ENCODE measurements at regions of chr4 and their contacts with region 1.

Region 1: GRCh38 chr4:147590249-147590920 is 26.8 kb upstream of the TMEM184C start:
- DNase-seq: peak; percentile 79
- ATAC-seq: peak; percentile 38
- H3K4me3 ChIP-seq: no peak overlapping the region
- H3K27ac ChIP-seq: no peak overlapping the region
- H3K4me1 ChIP-seq: 0 out of 2 replicates have a peak, but pooled peaks cover 7% of the 10 kb centered on the region
- H3K27me3 ChIP-seq: no peaks in the 10 kb centered on the region
- CTCF ChIP-seq: peak; percentile 74

Region 2: GRCh38 chr4:147019061-147019460 is 571.3 kb before region 1 on chr4:
- CTCF ChIA-PET with region 1: no interaction called
- POLR2A ChIA-PET with region 1: no interaction called
- intact Hi-C with region 1: loop called (anchors 1 kb)
- DNase-seq: peak; percentile 72
- ATAC-seq: peak; percentile 85
- H3K4me3 ChIP-seq: no peak overlapping the region
- H3K27ac ChIP-seq: no peak overlapping the region
- H3K4me1 ChIP-seq: no peaks in the 10 kb centered on the region
- H3K27me3 ChIP-seq: peaks cover 12% of the 10 kb centered on the region
- CTCF ChIP-seq: peak; percentile 77

Region 3: GRCh38 chr4:147111033-147111367 is 479.4 kb before region 1 on chr4:
- CTCF ChIA-PET with region 1: interaction called, 3 read pairs
- POLR2A ChIA-PET with region 1: no interaction called
- intact Hi-C with region 1: loop called (anchors 1 kb)
- DNase-seq: peak; percentile 43
- ATAC-seq: peak; percentile 38; the same call in 1 of the 2 replicates
- H3K4me3 ChIP-seq: no peak overlapping the region
- H3K27ac ChIP-seq: no peak overlapping the region
- H3K4me1 ChIP-seq: no peaks in the 10 kb centered on the region
- H3K27me3 ChIP-seq: no peaks in the 10 kb centered on the region
- CTCF ChIP-seq: peak; percentile 59

Region 4: GRCh38 chr4:147334478-147334877 is 255.9 kb before region 1 on chr4:
- CTCF ChIA-PET with region 1: no interaction called
- POLR2A ChIA-PET with region 1: no interaction called
- intact Hi-C with region 1: loop called (anchors 10 kb)
- DNase-seq: peak; percentile 73
- ATAC-seq: peak; percentile 96
- H3K4me3 ChIP-seq: no peak overlapping the region
- H3K27ac ChIP-seq: peak overlapping the region; percentile 59
- H3K4me1 ChIP-seq: peaks cover 14% of the 10 kb centered on the region; the same call in 1 of the 2 replicates
- H3K27me3 ChIP-seq: no peaks in the 10 kb centered on the region
- CTCF ChIP-seq: no peak

Region 5: GRCh38 chr4:147461161-147461560 is 129.2 kb before region 1 on chr4:
- CTCF ChIA-PET with region 1: no interaction called
- POLR2A ChIA-PET with region 1: no interaction called
- intact Hi-C with region 1: no loop called
- DNase-seq: peak; percentile 72
- ATAC-seq: peak; percentile 64
- H3K4me3 ChIP-seq: no peak overlapping the region
- H3K27ac ChIP-seq: peak overlapping the region; percentile 31; the same call in 1 of the 2 replicates
- H3K4me1 ChIP-seq: peaks cover 17% of the 10 kb centered on the region
- H3K27me3 ChIP-seq: no peaks in the 10 kb centered on the region
- CTCF ChIP-seq: no peak

Region 6: DNA sequence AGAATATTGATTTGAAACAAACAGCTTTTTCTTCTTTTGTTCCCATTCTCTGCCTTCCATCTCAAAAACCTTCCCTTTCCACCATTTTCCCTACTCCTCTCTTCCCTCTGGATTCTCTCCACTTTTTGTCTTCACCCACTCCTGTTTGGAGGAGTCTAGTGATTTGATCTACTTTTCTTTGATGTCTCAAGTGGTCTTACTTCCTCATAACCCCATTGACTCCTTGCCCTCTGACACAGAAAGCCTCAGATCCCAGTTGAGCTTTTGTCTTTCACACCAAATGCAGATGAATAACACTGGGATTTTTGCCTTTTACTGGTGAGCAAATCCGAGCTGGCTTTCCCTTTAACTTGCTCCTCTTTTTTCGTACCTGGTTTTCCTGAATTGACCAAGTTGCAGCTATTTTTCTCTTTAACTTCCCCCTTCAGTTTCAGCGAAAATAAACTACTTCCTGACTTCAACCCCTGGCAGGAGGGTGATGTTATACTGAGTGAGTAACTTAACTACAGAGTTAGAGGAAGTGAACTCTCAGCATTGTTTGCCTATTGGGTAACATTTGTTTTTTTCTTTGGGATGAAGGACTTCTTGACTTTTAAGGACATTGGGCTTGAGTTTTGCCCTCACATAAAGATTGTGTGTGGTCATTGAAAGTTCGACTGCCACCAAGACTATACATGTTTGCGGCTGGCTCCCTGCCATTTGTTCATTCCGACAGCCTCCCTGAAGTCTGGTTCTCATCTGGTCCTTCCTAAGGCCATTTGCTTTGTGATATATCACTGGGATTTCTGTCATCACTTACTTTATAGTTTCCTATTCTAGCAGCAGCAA is 1244.6 kb after region 1 on chr4:
- CTCF ChIA-PET with region 1: no interaction called
- POLR2A ChIA-PET with region 1: no interaction called
- intact Hi-C with region 1: no loop called
- DNase-seq: peak; percentile 47
- ATAC-seq: peak; percentile 46
- H3K4me3 ChIP-seq: no peak overlapping the region
- H3K27ac ChIP-seq: peak overlapping the region; percentile 71
- H3K4me1 ChIP-seq: peaks cover 12% of the 10 kb centered on the region
- H3K27me3 ChIP-seq: no peaks in the 10 kb centered on the region
- CTCF ChIP-seq: no peak

Measured in PC-3 (cell line).